Posterior cingulate gyrus (tissue), 11 donors: ENCODE measurements at regions of chr11 and their contacts with region 1.

Region 1: GRCh38 chr11:106087815-106088435 is 10.5 kb downstream of the AASDHPPT start:
- DNase-seq: peak in 9 of 10 donors; percentile 38 to 92 (median 60)

Region 2: DNA sequence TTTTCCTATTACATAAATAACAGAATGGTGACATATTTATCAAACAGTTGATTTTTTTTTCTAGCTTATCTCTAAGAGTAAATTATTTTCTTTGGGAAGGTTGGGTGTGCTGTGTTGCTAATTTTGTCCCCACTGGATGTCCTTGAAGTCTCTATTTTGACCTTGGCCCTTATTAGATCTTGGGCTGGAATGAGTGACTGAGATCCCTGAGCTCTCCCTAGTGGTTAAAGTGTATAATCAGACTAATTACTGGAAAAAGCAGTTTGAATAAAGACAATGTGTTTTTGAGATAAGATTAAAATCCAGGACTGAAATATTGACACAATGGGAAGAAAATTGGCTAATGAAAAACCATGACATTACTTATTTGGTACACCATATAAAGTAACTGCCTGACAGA is 45.6 kb after region 1 on chr11:
- intact Hi-C with region 1: no loop called
- DNase-seq: no peak

Region 3: GRCh38 chr11:107017433-107018227 is 929.7 kb after region 1 on chr11:
- intact Hi-C with region 1: loop called (anchors 5 kb)
- DNase-seq: peak; percentile 56 to 94 (median 64)

Region 4: GRCh38 chr11:107457558-107458271 is 1369.8 kb after region 1 on chr11 and contains the start of gene CWF19L2:
- intact Hi-C with region 1: loop called (anchors 10 kb)
- DNase-seq: peak; percentile 78 to 97 (median 86)